Common myeloid progenitor, CD34-positive (primary cell): ENCODE measurements at regions of chr9 and their contacts with region 1.

Region 1: DNA sequence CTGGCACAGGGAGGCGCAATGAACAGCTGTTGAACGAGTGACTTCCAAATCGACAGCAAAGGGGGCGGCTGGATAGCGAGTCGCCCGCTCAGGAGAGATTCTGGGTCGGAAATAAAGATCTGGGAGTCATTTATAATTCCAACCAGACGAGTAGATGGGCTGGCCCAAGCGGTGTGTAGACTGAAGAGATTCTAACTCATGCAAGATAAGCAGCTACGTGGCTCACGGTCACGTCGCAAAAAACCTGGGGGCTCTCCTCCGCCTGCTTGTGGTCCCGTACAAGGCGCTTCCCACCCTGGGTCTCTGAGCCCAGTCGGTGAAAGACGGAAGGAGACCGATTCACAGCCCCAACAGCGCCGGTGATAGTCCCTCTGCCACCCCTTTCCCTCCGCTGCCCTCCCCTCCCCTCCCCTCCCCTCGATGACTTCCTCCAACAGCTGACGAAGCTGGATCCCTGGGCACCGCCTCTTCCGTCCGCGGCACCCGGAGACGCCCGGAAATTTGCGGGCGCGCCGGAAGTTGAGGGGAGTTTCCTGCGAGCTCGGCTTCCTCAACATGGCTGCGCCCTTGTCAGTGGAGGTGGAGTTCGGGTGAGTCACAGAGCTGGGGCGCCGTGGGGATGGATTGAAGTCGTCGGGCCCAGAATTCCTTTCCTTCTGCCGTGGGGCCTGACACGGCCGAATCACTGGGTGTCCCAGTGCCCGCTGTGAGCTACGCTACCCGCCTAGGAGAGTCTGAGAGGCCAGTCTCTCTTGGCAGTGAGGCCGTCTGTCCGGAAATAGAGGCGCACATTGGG is at the start of gene URM1:
- DNase-seq: peak; percentile 98 to 99 (median 99)
- H3K4me3 ChIP-seq: peak within 1 kb of the TSS; percentile 74 to 95 (median 92)
- H3K27ac ChIP-seq: peak within 1 kb of the TSS; percentile 86 to 92
- H3K4me1 ChIP-seq: peaks cover 10 to 24% (median 19%) of the 10 kb centered on the region in 4 experiments
- H3K27me3 ChIP-seq: no peaks in the 10 kb centered on the region

Region 2: GRCh38 chr9:128412120-128412790 is 41.2 kb after region 1 on chr9:
- CTCF ChIA-PET with region 1: interaction called, 16 read pairs
- POLR2A ChIA-PET with region 1: no interaction called
- DNase-seq: peak; percentile 60 to 77 (median 74)
- H3K4me3 ChIP-seq: no peak overlapping the region
- H3K27ac ChIP-seq: no peak overlapping the region
- H3K4me1 ChIP-seq: peaks cover 0 to 8% (median 0%) of the 10 kb centered on the region in 4 experiments
- H3K27me3 ChIP-seq: peaks cover 7 to 65% (median 18%) of the 10 kb centered on the region in 5 experiments

Region 3: DNA sequence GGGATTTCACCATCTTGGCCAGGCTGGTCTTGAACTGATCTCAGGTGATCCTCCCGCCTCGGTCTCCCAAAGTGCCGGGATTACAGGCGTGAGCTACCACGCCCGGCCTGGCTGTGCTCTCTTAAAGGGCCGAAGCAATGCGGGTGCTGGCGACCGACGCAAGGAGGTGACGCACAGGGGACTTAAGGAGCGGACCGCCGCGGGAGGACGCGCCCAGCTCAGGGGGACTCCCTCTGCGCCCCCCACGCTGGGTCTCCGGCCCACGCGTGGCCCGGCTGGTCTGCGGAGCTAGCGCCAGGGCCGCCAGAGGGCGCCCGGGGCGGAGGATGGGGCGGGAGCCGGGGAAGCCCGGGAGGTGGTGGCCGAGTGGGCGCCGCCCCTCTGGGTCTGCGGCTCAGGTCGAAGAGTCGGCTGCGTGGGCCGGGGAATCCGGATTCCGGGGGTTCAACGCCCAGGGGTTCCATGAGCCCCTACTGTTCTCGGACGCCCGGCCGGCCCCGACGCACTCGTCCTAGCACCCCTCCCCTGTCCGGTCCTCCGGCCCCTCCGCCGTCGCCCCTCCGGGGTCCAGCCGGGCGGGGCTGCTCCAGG is 49.1 kb after region 1 on chr9:
- CTCF ChIA-PET with region 1: interaction called, 10 read pairs
- POLR2A ChIA-PET with region 1: no interaction called
- DNase-seq: peak; percentile 64 to 74 (median 71)
- H3K4me3 ChIP-seq: peak overlapping the region; percentile 65 to 88 (median 81)
- H3K27ac ChIP-seq: no peak overlapping the region
- H3K4me1 ChIP-seq: peaks cover 0 to 29% (median 22%) of the 10 kb centered on the region in 4 experiments
- H3K27me3 ChIP-seq: peaks cover 0 to 26% (median 7%) of the 10 kb centered on the region in 5 experiments